Activated naive CD4-positive, alpha-beta T cell treated with anti-CD3 and anti-CD28 coated beads for 36 hours (primary cell): ENCODE measurements at regions of chr1 and their contacts with region 1.

Region 1: GRCh38 chr1:185681034-185681633 is 53.1 kb upstream of the HMCN1 start:
- DNase-seq: peak; percentile 42
- H3K4me3 Mint-ChIP-seq: no peak overlapping the region
- H3K27ac Mint-ChIP-seq: no peak overlapping the region
- H3K4me1 Mint-ChIP-seq: peaks cover 15% of the 10 kb centered on the region
- H3K27me3 Mint-ChIP-seq: no peaks in the 10 kb centered on the region

Region 2: GRCh38 chr1:184982002-184982954 is 698.9 kb before region 1 on chr1:
- CTCF ChIA-PET with region 1: interaction called, 3 read pairs
- intact Hi-C with region 1: loop called (anchors 2 kb)
- DNase-seq: peak; percentile 84
- H3K4me3 Mint-ChIP-seq: no peak overlapping the region
- H3K27ac Mint-ChIP-seq: no peak overlapping the region
- H3K4me1 Mint-ChIP-seq: no peaks in the 10 kb centered on the region
- H3K27me3 Mint-ChIP-seq: peaks cover 17% of the 10 kb centered on the region

Region 3: GRCh38 chr1:185238447-185238846 is 442.7 kb before region 1 on chr1:
- CTCF ChIA-PET with region 1: interaction called, 16 read pairs
- intact Hi-C with region 1: loop called (anchors 1 kb)
- DNase-seq: no peak
- H3K4me3 Mint-ChIP-seq: no peak overlapping the region
- H3K27ac Mint-ChIP-seq: no peak overlapping the region
- H3K4me1 Mint-ChIP-seq: peaks cover 27% of the 10 kb centered on the region
- H3K27me3 Mint-ChIP-seq: no peaks in the 10 kb centered on the region

Region 4: DNA sequence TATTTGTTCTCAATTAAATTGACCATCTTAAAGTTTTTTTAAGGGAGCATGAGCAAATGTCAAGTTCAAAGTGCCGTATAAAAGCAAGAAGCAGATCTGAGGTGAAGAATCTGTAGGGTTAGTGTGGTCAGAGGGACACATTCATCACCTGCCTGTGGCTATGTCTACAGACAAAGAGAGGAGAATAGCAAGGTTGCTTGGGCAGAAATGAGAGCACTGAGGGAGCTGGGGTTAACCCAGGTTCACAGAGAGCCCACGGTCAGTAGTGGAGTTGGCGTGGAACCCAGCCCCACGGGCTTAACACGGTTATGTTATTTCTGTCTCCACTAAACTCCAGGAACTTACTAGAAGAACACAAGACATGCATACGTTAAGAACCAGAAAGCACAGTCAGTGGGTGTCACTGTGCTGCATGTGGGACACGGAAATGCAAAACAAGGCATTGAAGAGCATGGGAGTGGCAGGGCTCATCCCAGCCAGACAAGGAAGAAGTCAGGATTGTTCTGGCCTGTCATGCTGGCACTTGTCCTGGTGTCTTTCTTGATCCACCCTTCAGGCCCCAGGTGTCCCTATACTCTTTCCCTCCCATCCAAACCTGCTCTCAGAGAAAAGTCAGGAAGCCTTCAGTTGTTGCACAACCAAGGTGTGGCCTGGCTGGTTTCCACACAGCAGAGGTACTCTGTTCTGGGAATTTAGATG is 268.6 kb before region 1 on chr1:
- CTCF ChIA-PET with region 1: no interaction called
- intact Hi-C with region 1: no loop called
- DNase-seq: no peak
- H3K4me3 Mint-ChIP-seq: no peak overlapping the region
- H3K27ac Mint-ChIP-seq: no peak overlapping the region
- H3K4me1 Mint-ChIP-seq: no peaks in the 10 kb centered on the region
- H3K27me3 Mint-ChIP-seq: no peaks in the 10 kb centered on the region

Region 5: DNA sequence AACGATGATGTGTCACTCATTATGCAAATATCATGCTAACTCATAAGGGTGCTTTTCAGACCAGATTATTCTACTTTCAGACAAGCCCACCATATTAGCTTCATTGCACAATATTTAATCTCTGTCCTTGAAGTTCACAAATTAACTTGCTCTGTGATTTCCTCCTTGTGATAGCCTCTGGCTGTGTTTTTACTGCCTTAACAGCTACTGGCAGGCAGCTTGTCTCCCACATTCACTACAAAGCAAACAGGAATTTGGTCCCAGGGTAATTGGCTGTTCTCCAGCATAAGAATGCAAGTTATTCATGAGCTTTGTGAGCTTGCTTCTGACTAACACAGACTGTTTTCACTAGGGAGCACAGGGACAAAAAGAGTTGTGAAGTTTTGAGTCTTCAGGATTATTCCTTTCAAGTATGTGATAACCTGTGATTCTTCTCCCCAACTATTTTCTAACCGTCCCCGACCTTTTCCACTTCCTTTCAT is 34.9 kb before region 1 on chr1:
- CTCF ChIA-PET with region 1: interaction called, 19 read pairs
- intact Hi-C with region 1: no loop called
- DNase-seq: no peak
- H3K4me3 Mint-ChIP-seq: no peak overlapping the region
- H3K27ac Mint-ChIP-seq: no peak overlapping the region
- H3K4me1 Mint-ChIP-seq: peaks cover 33% of the 10 kb centered on the region
- H3K27me3 Mint-ChIP-seq: no peaks in the 10 kb centered on the region

Region 6: DNA sequence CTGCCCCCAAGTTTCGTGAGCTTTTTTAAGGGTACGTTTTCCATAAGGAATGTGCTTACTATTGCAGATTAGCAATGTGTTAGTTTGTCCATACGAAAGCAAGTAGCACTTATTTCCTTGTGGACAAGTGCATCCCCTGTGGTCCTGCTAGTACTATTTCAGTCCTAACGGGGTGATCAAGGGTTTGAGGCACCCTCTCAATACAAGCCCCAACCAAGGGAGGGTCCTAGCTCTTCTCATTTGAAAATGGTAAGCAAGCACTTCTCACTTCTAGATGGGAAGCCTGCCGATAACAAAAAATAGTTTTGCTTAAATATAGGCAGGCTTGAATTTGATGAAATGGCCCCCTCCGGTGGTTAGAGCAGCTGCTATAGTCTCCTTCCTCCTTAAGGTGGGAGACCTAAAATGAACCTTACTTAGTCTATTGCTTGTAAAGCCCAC is 10.9 kb before region 1 on chr1:
- CTCF ChIA-PET with region 1: interaction called, 34 read pairs
- intact Hi-C with region 1: no loop called
- DNase-seq: peak; percentile 69
- H3K4me3 Mint-ChIP-seq: no peak overlapping the region
- H3K27ac Mint-ChIP-seq: no peak overlapping the region
- H3K4me1 Mint-ChIP-seq: peaks cover 14% of the 10 kb centered on the region
- H3K27me3 Mint-ChIP-seq: no peaks in the 10 kb centered on the region